ENCODE measurements at regions of chr12 and their contacts with region 1.

Region 1: DNA sequence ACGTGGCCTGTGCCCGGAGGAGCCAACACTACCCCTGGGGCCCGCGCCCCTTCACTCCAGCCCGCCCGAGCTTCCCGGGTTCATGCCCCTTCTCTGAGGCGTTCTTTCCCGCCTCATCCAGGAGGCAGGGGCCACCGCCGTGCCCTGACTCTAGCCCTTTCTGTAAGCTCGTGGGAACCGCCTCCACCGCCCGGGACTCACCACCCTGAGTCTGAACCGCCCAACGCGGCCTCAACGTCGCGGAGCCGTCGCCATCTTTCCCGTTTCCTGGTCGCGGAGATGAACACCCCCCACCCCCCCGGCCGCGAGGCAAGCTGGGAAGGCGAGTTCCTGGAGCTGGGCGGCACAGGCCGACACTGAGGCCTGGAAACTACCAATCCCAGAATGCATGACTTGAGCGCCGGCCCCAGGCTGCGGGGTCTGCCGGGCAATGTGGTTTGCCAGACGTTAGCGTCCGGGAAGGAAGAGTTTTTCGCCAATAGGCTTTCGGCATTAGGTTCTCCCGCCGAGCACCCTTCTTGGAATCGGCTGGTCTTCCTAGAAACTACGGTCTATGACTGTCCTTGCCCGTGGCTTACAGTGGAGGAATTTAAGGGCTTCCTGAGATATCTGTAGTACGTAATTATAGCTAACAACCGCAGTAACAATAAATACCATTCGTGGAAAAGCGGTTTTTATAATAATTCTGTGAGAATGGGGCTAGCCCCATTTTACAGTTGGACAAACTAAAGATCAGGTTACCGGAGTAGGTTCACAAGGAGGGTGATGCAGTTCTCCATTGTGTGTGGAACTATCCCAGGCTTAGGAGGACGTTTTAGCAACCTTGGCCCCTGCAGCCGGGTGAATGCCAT is at the start of gene DDX23:
- DNase-seq: peak; percentile 91
- H3K4me3 Mint-ChIP-seq: peak within 1 kb of the TSS; percentile 88
- H3K27ac Mint-ChIP-seq: peak within 1 kb of the TSS; percentile 94
- H3K4me1 Mint-ChIP-seq: peaks cover 21% of the 10 kb centered on the region
- H3K27me3 Mint-ChIP-seq: no peaks in the 10 kb centered on the region
- total RNA-seq, gene DDX23: 114 and 124 TPM in 2 replicates

Region 2: DNA sequence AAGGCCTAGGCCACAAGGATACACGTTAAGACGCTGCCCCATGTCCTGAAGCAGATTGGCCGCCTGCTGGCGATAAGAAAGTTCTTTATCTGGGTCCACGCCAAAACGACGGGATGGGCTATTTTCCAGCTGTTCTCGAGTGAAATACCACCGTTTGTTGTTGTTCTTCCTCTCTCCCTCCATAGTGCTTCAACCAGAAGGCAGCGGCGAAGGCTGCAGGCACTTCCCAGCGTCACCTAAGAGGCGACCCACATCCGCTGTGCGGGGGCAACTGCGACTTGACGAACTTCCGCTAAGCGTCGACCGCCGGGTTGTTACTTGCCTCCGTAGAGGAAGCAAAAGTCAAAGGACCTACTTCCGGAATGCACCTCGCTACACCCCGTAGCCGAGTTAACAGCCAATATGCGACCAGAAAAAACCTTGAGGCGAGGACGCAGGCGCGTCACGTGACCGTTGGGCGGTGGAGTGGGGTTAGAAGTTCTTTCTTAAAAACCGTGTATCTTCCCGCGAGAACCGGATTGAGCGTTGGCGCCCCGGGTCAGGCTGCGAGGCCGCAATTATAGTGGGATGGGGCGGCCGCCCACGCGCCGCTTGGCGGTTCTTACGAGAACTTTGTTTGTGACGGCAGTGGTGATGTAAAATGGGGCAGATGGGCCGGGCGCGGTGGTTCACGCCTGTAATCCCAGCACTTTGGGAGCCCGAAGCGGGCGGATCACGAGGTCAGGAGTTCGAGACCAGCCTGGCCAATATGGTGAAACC is 135.4 kb before region 1 on chr12 and contains the start of gene CCNT1:
- intact Hi-C with region 1: loop called (anchors 1 kb)
- DNase-seq: peak; percentile 99
- H3K4me3 Mint-ChIP-seq: peak within 1 kb of the TSS; percentile 92
- H3K27ac Mint-ChIP-seq: peak within 1 kb of the TSS; percentile 95
- H3K4me1 Mint-ChIP-seq: peaks cover 31% of the 10 kb centered on the region
- H3K27me3 Mint-ChIP-seq: no peaks in the 10 kb centered on the region
- total RNA-seq, gene CCNT1: 70.2 and 71.9 TPM in 2 replicates

Region 3: GRCh38 chr12:48890657-48891418 is 38.7 kb after region 1 on chr12:
- intact Hi-C with region 1: loop called (anchors 1 kb)
- DNase-seq: peak; percentile 67
- H3K4me3 Mint-ChIP-seq: no peak overlapping the region
- H3K27ac Mint-ChIP-seq: no peak overlapping the region
- H3K4me1 Mint-ChIP-seq: peaks cover 7% of the 10 kb centered on the region
- H3K27me3 Mint-ChIP-seq: peaks cover 19% of the 10 kb centered on the region

Region 4: GRCh38 chr12:48936379-48936979 is 84.4 kb after region 1 on chr12:
- intact Hi-C with region 1: loop called (anchors 1 kb)
- DNase-seq: peak; percentile 62
- H3K4me3 Mint-ChIP-seq: no peak overlapping the region
- H3K27ac Mint-ChIP-seq: no peak overlapping the region
- H3K4me1 Mint-ChIP-seq: peaks cover 12% of the 10 kb centered on the region
- H3K27me3 Mint-ChIP-seq: no peaks in the 10 kb centered on the region

Region 5: GRCh38 chr12:48995061-48995879 is 143.2 kb after region 1 on chr12:
- intact Hi-C with region 1: loop called (anchors 2 kb)
- DNase-seq: no peak
- H3K4me3 Mint-ChIP-seq: no peak overlapping the region
- H3K27ac Mint-ChIP-seq: no peak overlapping the region
- H3K4me1 Mint-ChIP-seq: peaks cover 26% of the 10 kb centered on the region
- H3K27me3 Mint-ChIP-seq: peaks cover 55% of the 10 kb centered on the region

Region 6: GRCh38 chr12:49060237-49061156 is 208.4 kb after region 1 on chr12 and contains the start of gene KMT2D:
- intact Hi-C with region 1: loop called (anchors 5 kb)
- DNase-seq: peak; percentile 89
- H3K4me3 Mint-ChIP-seq: peak within 1 kb of the TSS; percentile 92
- H3K27ac Mint-ChIP-seq: peak within 1 kb of the TSS; percentile 89
- H3K4me1 Mint-ChIP-seq: peaks cover 43% of the 10 kb centered on the region
- H3K27me3 Mint-ChIP-seq: no peaks in the 10 kb centered on the region
- total RNA-seq, gene KMT2D: 93.3 and 100 TPM in 2 replicates